Esophagus muscularis mucosa (tissue), 4 donors: ENCODE measurements at regions of chrX and their contacts with region 1.

Region 1: GRCh38 chrX:24150051-24150790 is 692 bp downstream of the ZFX start:
- DNase-seq: peak; percentile 94
- H3K4me3 ChIP-seq: peak overlapping the region; percentile 64 to 88 (median 74)
- H3K27ac ChIP-seq: peak overlapping the region; percentile 95 to 98 (median 96)
- H3K4me1 ChIP-seq: peaks cover 67 to 80% (median 72%) of the 10 kb centered on the region in 4 donors
- H3K27me3 ChIP-seq: no peaks in the 10 kb centered on the region
- CTCF ChIP-seq: peak; percentile 49 to 70 (median 59)
- EP300 ChIP-seq: no peak
- POLR2A ChIP-seq: no peak

Region 2: DNA sequence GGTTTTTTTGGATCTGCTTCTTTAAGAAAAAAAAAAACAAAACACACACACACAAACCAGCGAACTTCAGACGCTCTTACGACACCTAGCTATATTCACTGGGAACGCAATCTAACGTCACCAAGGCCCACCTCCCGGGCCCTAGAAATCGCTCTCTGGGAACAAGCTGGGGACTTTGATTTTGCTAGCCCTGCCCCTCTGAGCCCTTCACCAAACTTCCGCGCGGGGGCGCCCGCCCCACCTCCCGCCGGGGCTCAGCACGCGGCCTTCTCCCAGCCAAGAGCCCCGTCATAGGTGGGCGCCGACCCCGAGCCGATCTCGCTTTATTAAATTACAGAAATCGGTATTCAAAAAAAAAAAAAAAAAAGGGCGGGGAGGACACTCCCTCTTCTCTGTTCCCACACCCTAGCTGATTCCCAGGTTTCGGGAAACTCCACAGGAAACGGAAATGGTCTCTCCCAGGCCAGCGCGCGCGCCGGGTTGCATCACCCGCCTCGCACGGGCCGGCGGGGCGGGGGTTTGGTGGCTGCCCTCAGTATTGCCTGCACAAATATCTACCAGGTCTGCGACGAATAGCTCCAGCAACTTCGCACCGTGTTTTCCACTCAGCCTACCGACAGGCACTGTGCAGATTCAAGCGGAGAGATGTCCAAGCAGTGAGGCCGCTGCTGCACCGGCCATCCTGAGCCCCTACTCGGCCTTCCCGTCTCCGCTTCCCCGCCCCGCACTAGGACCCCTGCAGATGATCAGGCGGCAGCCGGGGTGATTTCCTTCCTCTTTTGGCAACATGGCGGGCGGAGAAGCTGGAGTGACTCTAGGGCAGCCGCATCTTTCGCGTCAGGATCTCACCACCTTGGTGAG is 95.8 kb before region 1 on chrX and contains the start of gene EIF2S3:
- intact Hi-C with region 1: loop called (anchors 10 kb)
- DNase-seq: peak; percentile 94
- H3K4me3 ChIP-seq: peak within 1 kb of the TSS in 3 of 4 donors; percentile 69 to 87 (median 70)
- H3K27ac ChIP-seq: peak within 1 kb of the TSS; percentile 85 to 90 (median 89)
- H3K4me1 ChIP-seq: peaks cover 0 to 6% (median 2%) of the 10 kb centered on the region in 4 donors
- H3K27me3 ChIP-seq: no peaks in the 10 kb centered on the region
- CTCF ChIP-seq: peak; percentile 55 to 63 (median 56)
- EP300 ChIP-seq: no peak
- POLR2A ChIP-seq: peak; percentile 38
- total RNA-seq, gene EIF2S3: 116 to 159 (median 126) TPM

Region 3: DNA sequence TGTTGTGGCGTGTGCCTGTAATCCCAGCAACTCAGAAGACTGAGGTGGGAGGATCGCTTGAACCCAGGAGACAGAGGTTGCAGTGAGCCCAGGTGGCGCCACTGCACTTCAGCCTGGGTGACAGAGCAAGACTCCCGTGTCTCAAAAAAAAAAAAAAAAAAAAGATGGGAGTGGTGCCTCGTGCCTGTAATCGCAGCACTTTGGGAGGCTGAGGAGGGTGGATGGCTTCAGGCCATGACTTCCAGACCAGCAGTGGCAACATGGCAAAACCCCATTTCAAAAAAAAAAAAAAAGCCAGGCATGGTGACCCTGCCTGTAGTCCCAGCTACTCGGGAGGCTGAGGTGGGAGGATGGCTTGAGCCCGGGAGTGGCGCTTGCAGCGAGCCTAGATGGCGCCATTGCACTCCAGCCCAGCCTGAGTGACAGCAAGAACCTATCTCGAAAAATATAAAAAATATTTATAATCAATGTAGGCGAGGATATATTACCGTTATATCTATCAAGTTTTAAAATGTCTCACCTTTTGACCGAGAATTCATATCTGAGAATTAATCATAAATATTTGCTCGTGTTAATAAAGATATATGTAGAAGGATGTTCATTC is 68.5 kb before region 1 on chrX:
- intact Hi-C with region 1: loop called (anchors 2 kb)
- DNase-seq: no peak
- H3K4me3 ChIP-seq: no peak overlapping the region
- H3K27ac ChIP-seq: no peak overlapping the region
- H3K4me1 ChIP-seq: no peaks in the 10 kb centered on the region
- H3K27me3 ChIP-seq: no peaks in the 10 kb centered on the region
- CTCF ChIP-seq: peak; percentile 30 to 45 (median 36)
- EP300 ChIP-seq: no peak
- POLR2A ChIP-seq: no peak

Region 4: DNA sequence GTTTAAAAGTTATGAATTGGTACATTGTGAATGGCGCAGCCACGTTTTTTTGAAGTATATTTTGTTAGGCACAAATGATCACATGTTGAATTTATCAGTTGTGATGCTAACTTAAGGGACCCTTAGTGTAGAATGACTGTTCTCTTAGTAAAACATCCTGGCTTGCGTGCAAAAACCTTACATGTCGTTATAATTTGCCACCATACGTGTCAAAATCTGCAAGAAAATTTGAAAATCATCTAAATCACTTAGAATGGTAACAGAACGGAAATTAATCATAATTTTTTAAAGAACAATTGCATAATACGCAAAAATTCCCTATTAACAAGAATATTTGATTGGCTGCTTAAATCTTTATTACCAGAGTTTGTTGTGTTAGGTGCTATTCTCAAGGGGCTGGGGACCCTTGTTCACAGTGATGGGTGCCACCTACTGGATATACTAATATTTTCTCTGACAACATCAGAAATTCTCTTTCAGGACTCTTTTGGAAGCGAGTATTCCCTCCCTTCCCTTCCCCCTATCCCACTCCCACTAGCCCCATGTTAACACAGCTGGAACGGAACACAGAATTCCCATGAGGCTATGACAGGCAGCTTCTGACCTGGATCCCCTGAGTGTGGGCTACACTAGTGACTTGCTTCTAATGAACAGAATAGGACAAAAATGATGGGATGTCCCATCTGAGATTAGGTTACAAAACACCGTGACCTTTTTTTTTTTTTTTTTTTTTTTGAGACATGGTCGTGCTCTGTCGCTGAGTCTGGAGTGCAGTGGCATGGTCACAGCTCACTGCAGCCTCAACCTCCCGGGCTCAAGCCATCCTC is 91.8 kb after region 1 on chrX:
- intact Hi-C with region 1: loop called (anchors 2 kb)
- DNase-seq: no peak
- H3K4me3 ChIP-seq: no peak overlapping the region
- H3K27ac ChIP-seq: peak overlapping the region in 1 of 4 donors; percentile 42
- H3K4me1 ChIP-seq: peaks cover 0 to 32% (median 8%) of the 10 kb centered on the region in 4 donors
- H3K27me3 ChIP-seq: no peaks in the 10 kb centered on the region
- CTCF ChIP-seq: peak; percentile 33 to 44 (median 38)
- EP300 ChIP-seq: no peak
- POLR2A ChIP-seq: no peak